Naive thymus-derived CD4-positive, alpha-beta T cell (primary cell): ENCODE measurements at regions of chr4 and their contacts with region 1.

Region 1: DNA sequence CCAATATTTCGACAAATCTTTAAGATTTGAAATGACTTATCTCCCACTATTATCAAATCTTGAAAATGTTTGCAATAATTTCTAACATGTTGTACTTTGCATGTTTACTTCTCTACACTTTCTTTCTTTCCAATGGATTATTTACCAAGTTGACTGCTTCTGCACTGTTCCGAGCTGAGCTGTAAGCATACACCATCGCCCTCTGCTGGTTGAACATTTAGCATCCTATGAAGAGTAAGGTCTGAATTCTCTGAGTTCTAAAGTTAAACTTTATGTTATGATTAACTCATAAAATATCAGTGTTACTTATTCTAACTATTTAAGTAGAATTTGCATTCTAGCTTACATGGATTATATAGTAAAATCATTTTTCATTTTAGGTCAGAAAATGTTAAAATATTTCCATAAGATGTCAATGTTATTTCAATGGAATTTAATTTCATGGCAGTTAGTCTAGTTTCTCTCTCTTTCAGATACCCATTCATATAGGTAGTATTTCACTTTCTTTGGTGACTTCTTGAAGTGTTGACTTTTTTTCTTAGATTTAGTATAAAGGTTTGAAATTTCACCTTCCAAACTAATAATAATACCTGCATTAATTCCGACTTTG is 137.4 kb downstream of the DKK2 start:
- DNase-seq: peak in 2 of 9 donors; percentile 2 to 4
- ATAC-seq: no peak
- H3K4me3 ChIP-seq: no peak overlapping the region
- H3K4me3 Mint-ChIP-seq: no peak overlapping the region
- H3K27ac ChIP-seq: no peak overlapping the region
- H3K27ac Mint-ChIP-seq: no peak overlapping the region
- H3K4me1 ChIP-seq: no peaks in the 10 kb centered on the region
- H3K4me1 Mint-ChIP-seq: no peaks in the 10 kb centered on the region
- H3K27me3 ChIP-seq: no peaks in the 10 kb centered on the region
- H3K27me3 Mint-ChIP-seq: no peaks in the 10 kb centered on the region

Region 2: DNA sequence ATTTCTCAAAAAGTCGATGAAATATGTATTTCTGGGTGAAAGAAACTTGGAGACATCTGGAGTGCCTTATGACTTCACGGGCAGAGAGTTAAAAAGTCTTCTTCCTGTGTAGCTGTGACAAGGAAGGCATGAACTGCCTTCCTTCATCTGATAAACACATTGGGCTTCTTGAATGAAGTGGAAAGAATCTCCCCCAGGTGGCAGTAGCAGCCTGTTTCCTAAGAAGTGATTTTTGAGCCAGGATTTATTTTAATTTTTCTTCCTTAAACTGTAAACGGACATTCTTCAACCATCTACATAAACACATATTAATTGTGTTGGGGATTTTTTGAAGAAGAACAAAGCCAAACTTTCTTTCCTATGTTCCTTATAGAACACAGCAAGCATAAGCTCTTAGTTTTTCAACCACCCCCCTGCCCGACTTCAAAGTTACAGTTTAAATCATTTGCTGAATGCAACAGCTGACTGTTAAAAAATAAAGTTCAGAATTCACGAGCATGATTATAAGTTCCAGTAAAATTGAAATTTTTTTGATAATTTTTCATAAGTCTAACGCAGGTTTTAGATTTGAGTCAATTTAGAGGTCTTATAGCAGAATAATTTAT is 529.2 kb before region 1 on chr4:
- CTCF ChIA-PET with region 1: no interaction called
- POLR2A ChIA-PET with region 1: no interaction called
- intact Hi-C with region 1: loop called in 1 of 2 experiments (anchors 1 kb)
- DNase-seq: peak in 5 of 9 donors; percentile 1 to 28 (median 1)
- ATAC-seq: peak; percentile 60
- H3K4me3 ChIP-seq: no peak overlapping the region
- H3K4me3 Mint-ChIP-seq: no peak overlapping the region
- H3K27ac ChIP-seq: no peak overlapping the region
- H3K27ac Mint-ChIP-seq: no peak overlapping the region
- H3K4me1 ChIP-seq: no peaks in the 10 kb centered on the region
- H3K4me1 Mint-ChIP-seq: peaks cover 0 to 5% (median 0%) of the 10 kb centered on the region in 7 donors
- H3K27me3 ChIP-seq: no peaks in the 10 kb centered on the region
- H3K27me3 Mint-ChIP-seq: peaks cover 19 to 31% (median 24%) of the 10 kb centered on the region in 5 donors

Region 3: GRCh38 chr4:107050525-107051135 is 151.9 kb after region 1 on chr4:
- CTCF ChIA-PET with region 1: no interaction called
- POLR2A ChIA-PET with region 1: no interaction called
- intact Hi-C with region 1: no loop called
- DNase-seq: no peak
- ATAC-seq: no peak
- H3K4me3 ChIP-seq: no peak overlapping the region
- H3K4me3 Mint-ChIP-seq: no peak overlapping the region
- H3K27ac ChIP-seq: no peak overlapping the region
- H3K27ac Mint-ChIP-seq: no peak overlapping the region
- H3K4me1 ChIP-seq: no peaks in the 10 kb centered on the region
- H3K4me1 Mint-ChIP-seq: no peaks in the 10 kb centered on the region
- H3K27me3 ChIP-seq: no peaks in the 10 kb centered on the region
- H3K27me3 Mint-ChIP-seq: peaks cover 0 to 3% (median 0%) of the 10 kb centered on the region in 5 donors